A549 (cell line): ENCODE measurements at regions of chr12 and their contacts with region 1.

Region 1: GRCh38 chr12:51692016-51692415 is 101.0 kb downstream of the SCN8A start:
- DNase-seq: no peak
- ATAC-seq: no peak
- H3K4me3 ChIP-seq: no peak overlapping the region
- H3K27ac ChIP-seq: no peak overlapping the region
- H3K4me1 ChIP-seq: no peaks in the 10 kb centered on the region; the same call in 2 of the 3 replicates
- CTCF ChIP-seq: no peak
- EP300 ChIP-seq: no peak
- POLR2A ChIP-seq: no peak
- RAD21 ChIP-seq: no peak

Region 2: DNA sequence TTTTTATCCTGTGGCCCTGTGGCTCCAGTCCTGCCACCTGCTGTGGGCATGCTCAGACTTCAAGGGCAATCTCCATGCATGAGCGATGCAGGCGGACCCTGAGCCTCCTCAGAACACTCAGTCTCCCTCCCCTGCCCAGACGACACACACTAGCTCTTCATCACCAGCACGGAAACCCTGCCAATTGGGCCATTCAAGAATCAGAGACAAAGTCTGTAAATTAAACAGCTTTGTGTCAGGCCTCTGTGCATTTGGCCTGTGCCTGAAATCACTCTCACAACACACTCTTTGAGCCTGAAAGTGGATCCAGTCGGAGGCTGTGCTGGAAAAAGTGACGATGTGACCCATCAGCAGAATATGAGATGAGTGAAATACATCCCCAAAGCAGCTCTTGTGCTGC is 486.7 kb before region 1 on chr12:
- CTCF ChIA-PET with region 1: no interaction called
- POLR2A ChIA-PET with region 1: no interaction called
- DNase-seq: no peak
- ATAC-seq: no peak
- H3K4me3 ChIP-seq: no peak overlapping the region
- H3K27ac ChIP-seq: no peak overlapping the region
- H3K4me1 ChIP-seq: 0 out of 3 replicates have a peak, but pooled peaks cover 3% of the 10 kb centered on the region
- CTCF ChIP-seq: no peak
- EP300 ChIP-seq: no peak
- POLR2A ChIP-seq: no peak
- RAD21 ChIP-seq: no peak

Region 3: GRCh38 chr12:51678086-51678724 is 13.8 kb before region 1 on chr12:
- CTCF ChIA-PET with region 1: interaction called, 19 read pairs
- POLR2A ChIA-PET with region 1: no interaction called
- DNase-seq: peak; percentile 74 to 81
- ATAC-seq: peak; percentile 97 to 99
- H3K4me3 ChIP-seq: no peak overlapping the region
- H3K27ac ChIP-seq: no peak overlapping the region
- H3K4me1 ChIP-seq: peaks cover 6% of the 10 kb centered on the region
- CTCF ChIP-seq: peak; percentile 79
- EP300 ChIP-seq: no peak
- POLR2A ChIP-seq: no peak
- RAD21 ChIP-seq: peak; percentile 66 to 77

Region 4: GRCh38 chr12:52004042-52004648 is 312.1 kb after region 1 on chr12:
- CTCF ChIA-PET with region 1: no interaction called
- POLR2A ChIA-PET with region 1: no interaction called
- DNase-seq: peak; percentile 69 to 78
- ATAC-seq: peak; percentile 73 to 83
- H3K4me3 ChIP-seq: no peak overlapping the region
- H3K27ac ChIP-seq: no peak overlapping the region
- H3K4me1 ChIP-seq: 0 out of 3 replicates have a peak, but pooled peaks cover 3% of the 10 kb centered on the region
- CTCF ChIP-seq: peak; percentile 88
- EP300 ChIP-seq: no peak
- POLR2A ChIP-seq: no peak
- RAD21 ChIP-seq: peak; percentile 90 to 95